A549 (cell line): ENCODE measurements at regions of chr14 and their contacts with region 1.

Region 1: DNA sequence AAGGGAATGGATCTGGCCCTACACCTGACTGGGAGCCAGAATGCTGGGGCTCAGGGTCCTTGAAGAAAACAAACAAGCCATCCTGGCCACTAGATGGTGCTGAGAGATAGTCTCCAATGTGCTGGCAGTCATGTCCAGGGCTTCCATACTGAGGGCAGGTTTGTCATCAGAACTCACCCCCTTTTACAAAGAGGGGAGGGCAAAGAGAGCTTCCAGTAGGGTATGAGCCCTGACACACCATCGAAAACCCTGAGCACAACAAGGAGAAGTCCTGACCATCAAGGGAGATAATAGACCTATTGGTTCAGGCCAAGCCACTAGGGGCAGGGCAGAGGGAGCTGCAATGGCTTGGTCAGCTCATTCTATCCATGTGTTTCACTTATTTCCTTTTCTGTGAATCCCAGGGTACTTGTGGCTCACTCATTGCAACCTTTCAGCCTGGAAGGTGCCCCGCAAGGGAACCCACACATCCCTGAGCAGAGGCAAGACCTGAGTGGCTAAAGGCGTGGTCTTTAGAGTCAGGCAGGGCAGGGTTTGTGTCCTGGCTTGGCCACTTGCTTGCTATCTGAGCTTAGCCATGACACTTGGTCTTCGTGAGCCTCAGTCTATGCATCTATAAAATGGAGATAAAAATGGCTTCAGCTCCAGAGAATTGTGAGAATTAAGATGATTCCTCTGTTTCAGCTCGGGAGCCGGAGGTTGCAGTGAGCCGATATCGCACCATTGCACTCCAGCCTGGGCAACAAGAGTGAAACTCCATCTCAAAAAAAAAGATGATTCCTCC is 6.2 kb upstream of the PLEKHH1 start:
- DNase-seq: peak; percentile 54 to 71
- ATAC-seq: peak; percentile 91 to 96
- H3K4me3 ChIP-seq: no peak overlapping the region
- H3K27ac ChIP-seq: no peak overlapping the region
- H3K4me1 ChIP-seq: no peaks in the 10 kb centered on the region
- CTCF ChIP-seq: peak; percentile 95
- EP300 ChIP-seq: no peak
- POLR2A ChIP-seq: no peak
- RAD21 ChIP-seq: peak; percentile 79 to 84

Region 2: DNA sequence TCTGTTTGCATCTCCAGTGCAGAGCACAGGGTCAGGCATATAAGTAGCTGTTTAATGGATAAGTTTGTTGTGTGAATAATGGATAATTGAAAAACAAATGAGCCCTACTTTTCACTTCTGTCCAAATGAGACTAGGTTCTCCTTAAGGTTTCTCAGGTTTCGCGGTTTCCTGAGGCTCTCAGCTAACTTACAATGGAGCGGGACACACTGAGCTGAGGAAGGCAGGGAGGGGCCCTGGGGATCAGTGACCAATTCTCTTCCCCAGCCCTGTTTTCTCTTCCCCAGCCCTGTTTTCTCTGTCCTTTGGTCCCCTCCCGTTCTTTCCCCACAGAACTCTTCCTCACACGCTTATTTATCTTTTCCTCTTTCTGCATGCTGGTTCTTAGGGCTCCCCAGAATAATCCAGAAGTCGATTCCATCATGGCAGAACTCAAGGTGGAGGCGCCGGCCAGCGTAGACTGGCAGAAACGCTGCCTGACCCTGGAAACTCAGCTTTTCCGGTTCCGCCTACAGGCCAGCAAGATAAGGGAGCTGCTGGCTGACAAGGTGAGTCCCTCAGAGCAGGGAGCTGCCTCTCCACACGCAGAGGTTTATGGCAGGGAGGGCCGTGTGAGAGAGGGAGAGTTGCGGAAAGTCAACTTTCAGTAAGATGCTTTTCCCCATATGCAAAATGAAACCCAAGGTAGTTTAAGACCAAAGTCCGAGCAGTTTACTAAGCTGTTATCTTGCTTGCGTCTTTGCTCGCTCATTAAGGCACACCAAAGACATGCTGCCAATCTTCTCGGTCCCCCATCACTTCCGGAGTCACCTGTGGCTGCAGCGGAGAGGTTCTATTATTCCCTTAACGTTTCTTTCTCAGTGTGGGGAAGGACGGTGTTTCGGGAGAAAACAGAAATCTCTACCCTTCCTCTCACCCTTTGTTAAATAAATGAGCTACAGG is 14.8 kb after region 1 on chr14:
- CTCF ChIA-PET with region 1: interaction called, 39 read pairs
- POLR2A ChIA-PET with region 1: no interaction called
- DNase-seq: no peak
- ATAC-seq: no peak
- H3K4me3 ChIP-seq: no peak overlapping the region
- H3K27ac ChIP-seq: no peak overlapping the region
- H3K4me1 ChIP-seq: no peaks in the 10 kb centered on the region
- CTCF ChIP-seq: no peak
- EP300 ChIP-seq: no peak
- POLR2A ChIP-seq: no peak
- RAD21 ChIP-seq: no peak

Region 3: GRCh38 chr14:67557126-67557525 is 30.3 kb after region 1 on chr14:
- CTCF ChIA-PET with region 1: interaction called, 20 read pairs
- POLR2A ChIA-PET with region 1: no interaction called
- DNase-seq: peak in 1 of 2 experiments; percentile 11
- ATAC-seq: peak; percentile 39 to 57; a peak in 4 of 6 replicates
- H3K4me3 ChIP-seq: no peak overlapping the region
- H3K27ac ChIP-seq: no peak overlapping the region; a peak in 1 of 6 replicates
- H3K4me1 ChIP-seq: peaks cover 9% of the 10 kb centered on the region; the same call in 1 of the 3 replicates
- CTCF ChIP-seq: no peak
- EP300 ChIP-seq: no peak
- POLR2A ChIP-seq: no peak
- RAD21 ChIP-seq: no peak

Region 4: DNA sequence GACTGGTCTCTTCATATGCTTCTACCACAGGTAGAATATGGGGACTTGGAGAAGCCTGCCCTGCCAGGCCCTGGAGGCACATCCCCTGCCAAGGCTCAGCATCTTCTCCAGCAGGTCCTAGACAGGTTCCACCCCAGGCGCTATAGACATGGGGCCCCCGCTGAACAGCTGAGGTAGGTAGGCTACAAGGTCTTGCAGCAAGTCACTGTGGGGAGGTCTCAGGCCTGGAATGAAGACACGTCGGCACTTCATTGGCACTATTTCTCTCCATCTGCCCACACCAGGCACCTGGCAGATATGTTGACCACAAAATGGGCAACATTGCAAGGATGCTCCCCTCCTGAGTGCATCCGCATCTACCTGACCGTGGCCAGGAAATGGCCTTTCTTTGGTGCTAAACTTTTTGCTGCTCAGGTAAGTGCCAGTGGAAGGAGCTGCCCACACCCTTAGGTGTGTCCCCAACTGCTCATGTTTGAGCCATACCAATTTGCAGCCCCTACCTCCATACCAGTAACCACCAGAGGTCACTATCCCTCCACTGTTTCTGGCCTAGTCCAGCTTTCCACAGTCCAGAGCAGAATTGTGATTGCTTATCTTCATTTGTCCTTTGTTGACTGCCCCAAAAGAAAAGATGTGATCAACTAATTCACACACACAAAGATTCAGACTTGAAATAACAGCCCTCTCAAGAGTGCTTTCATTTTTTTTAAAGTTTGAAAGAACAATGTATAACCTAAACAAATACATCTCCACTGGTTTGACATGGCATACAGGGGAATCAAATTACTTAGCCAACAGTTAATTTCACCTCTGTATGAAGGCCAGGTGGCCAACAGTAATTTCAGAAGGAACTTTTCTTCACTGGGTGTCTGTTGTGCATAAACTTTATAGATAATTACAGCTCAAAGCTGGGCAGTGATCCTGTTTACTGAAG is 57.1 kb after region 1 on chr14:
- CTCF ChIA-PET with region 1: interaction called, 46 read pairs
- POLR2A ChIA-PET with region 1: no interaction called
- DNase-seq: peak; percentile 56 to 81
- ATAC-seq: peak; percentile 93 to 96
- H3K4me3 ChIP-seq: no peak overlapping the region
- H3K27ac ChIP-seq: no peak overlapping the region
- H3K4me1 ChIP-seq: no peaks in the 10 kb centered on the region
- CTCF ChIP-seq: peak; percentile 80
- EP300 ChIP-seq: no peak
- POLR2A ChIP-seq: no peak
- RAD21 ChIP-seq: peak; percentile 80 to 88

Region 5: GRCh38 chr14:67919259-67920032 is 392.6 kb after region 1 on chr14:
- CTCF ChIA-PET with region 1: no interaction called
- POLR2A ChIA-PET with region 1: no interaction called
- DNase-seq: no peak
- ATAC-seq: no peak; a peak in 1 of 6 replicates
- H3K4me3 ChIP-seq: no peak overlapping the region
- H3K27ac ChIP-seq: no peak overlapping the region
- H3K4me1 ChIP-seq: no peaks in the 10 kb centered on the region
- CTCF ChIP-seq: no peak
- EP300 ChIP-seq: no peak
- POLR2A ChIP-seq: no peak
- RAD21 ChIP-seq: no peak

Region 6: GRCh38 chr14:68124979-68125731 is 598.3 kb after region 1 on chr14:
- CTCF ChIA-PET with region 1: no interaction called
- POLR2A ChIA-PET with region 1: no interaction called
- DNase-seq: peak; percentile 51 to 80
- ATAC-seq: peak; percentile 92 to 95
- H3K4me3 ChIP-seq: no peak overlapping the region
- H3K27ac ChIP-seq: peak overlapping the region; percentile 75 to 88
- H3K4me1 ChIP-seq: peaks cover 34% of the 10 kb centered on the region
- CTCF ChIP-seq: no peak
- EP300 ChIP-seq: peak in 1 of 2 experiments; percentile 38; a peak in 1 of 5 replicates
- POLR2A ChIP-seq: no peak
- RAD21 ChIP-seq: no peak; a peak in 1 of 5 replicates